ENCODE measurements at regions of chr3 and their contacts with region 1.

Region 1: GRCh38 chr3:49469936-49470713 is at the start of gene DAG1:
- DNase-seq: peak; percentile 99
- H3K4me3 Mint-ChIP-seq: peak within 1 kb of the TSS; percentile 93
- H3K27ac Mint-ChIP-seq: peak within 1 kb of the TSS; percentile 91
- H3K4me1 Mint-ChIP-seq: peaks cover 21% of the 10 kb centered on the region
- H3K27me3 Mint-ChIP-seq: no peaks in the 10 kb centered on the region
- total RNA-seq, gene DAG1: 21.3 and 21.9 TPM in 2 replicates

Region 2: GRCh38 chr3:49119439-49119838 is 350.7 kb before region 1 on chr3:
- intact Hi-C with region 1: no loop called
- DNase-seq: no peak
- H3K4me3 Mint-ChIP-seq: peak overlapping the region; percentile 91
- H3K27ac Mint-ChIP-seq: peak overlapping the region; percentile 87
- H3K4me1 Mint-ChIP-seq: peaks cover 5% of the 10 kb centered on the region
- H3K27me3 Mint-ChIP-seq: no peaks in the 10 kb centered on the region

Region 3: GRCh38 chr3:49295489-49296058 is 174.6 kb before region 1 on chr3:
- intact Hi-C with region 1: no loop called
- DNase-seq: peak; percentile 78
- H3K4me3 Mint-ChIP-seq: no peak overlapping the region
- H3K27ac Mint-ChIP-seq: peak overlapping the region; percentile 15
- H3K4me1 Mint-ChIP-seq: no peaks in the 10 kb centered on the region
- H3K27me3 Mint-ChIP-seq: no peaks in the 10 kb centered on the region

Region 4: GRCh38 chr3:49529567-49529966 is 59.4 kb after region 1 on chr3:
- intact Hi-C with region 1: loop called (anchors 2 kb)
- DNase-seq: peak; percentile 65
- H3K4me3 Mint-ChIP-seq: peak overlapping the region; percentile 0
- H3K27ac Mint-ChIP-seq: peak overlapping the region; percentile 73
- H3K4me1 Mint-ChIP-seq: peaks cover 18% of the 10 kb centered on the region
- H3K27me3 Mint-ChIP-seq: no peaks in the 10 kb centered on the region

Region 5: DNA sequence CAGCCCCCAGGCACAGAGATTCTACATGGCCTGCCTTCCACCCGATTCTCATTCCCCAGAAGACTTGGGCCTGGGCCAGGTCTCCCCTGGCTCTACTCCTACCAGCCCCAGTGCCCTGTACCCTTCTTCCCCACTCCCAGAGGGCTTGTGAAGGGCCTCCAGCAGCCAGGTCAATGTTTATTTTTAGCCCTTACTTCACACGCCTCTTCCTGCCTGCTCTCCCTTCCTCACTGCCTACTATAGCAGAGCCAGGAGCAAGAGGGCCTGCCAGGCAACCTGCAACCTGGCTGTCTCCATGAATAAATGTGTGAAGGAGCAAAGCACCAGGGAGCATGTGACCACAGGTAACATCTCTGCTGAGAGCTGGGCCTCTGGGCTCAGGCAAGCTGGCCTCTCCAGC is 177.6 kb after region 1 on chr3:
- intact Hi-C with region 1: no loop called
- DNase-seq: no peak
- H3K4me3 Mint-ChIP-seq: no peak overlapping the region
- H3K27ac Mint-ChIP-seq: no peak overlapping the region
- H3K4me1 Mint-ChIP-seq: no peaks in the 10 kb centered on the region
- H3K27me3 Mint-ChIP-seq: no peaks in the 10 kb centered on the region

Region 6: DNA sequence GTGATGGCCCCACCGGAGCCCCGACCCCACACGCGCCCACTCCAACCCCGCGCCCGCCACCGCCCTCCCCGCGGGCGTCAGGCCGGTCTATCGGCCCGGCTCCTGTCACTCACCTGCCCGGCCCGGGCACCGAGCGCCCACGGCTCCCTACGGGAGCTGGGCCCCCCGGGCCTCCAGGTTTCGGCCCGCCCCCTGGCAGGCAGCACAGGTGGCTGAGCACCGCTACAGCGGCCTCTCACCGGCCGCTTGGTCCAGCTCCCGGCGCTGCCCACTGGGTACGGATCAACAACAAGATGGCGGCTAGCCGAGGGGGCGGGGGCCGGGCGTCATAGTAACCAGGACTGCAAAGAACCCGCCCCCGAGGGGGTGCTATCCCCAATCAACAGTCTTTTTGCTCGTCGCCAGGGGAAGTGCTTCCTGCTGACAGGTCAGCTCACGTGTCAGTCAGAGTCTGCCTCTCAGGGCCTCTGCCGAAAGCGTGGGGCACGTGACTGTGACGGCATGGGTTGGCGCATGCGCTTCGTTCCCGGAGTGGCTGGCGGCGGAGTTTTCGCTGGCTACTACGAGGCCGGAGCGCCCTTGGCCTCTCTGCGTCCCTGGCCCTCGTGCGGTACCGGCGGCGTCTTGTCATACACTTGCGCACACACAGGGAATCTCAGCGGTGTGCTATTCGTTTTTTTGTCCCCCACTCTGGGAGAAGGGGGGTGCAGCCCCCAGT is 316.3 kb after region 1 on chr3 and contains the start of gene IP6K1:
- intact Hi-C with region 1: loop called (anchors 1 kb)
- DNase-seq: peak; percentile 100
- H3K4me3 Mint-ChIP-seq: peak within 1 kb of the TSS; percentile 93
- H3K27ac Mint-ChIP-seq: peak within 1 kb of the TSS; percentile 94
- H3K4me1 Mint-ChIP-seq: peaks cover 25% of the 10 kb centered on the region
- H3K27me3 Mint-ChIP-seq: peaks cover 5% of the 10 kb centered on the region
- total RNA-seq, gene IP6K1: 39.6 and 42.2 TPM in 2 replicates